ENCODE measurements at regions of chr2 and their contacts with region 1.

Region 1: GRCh38 chr2:197255543-197255942 is 55.0 kb downstream of the ANKRD44 start:
- DNase-seq: peak in 7 of 9 donors; percentile 47 to 83 (median 56)
- ATAC-seq: peak; percentile 96
- H3K4me3 ChIP-seq: peak overlapping the region; percentile 38
- H3K4me3 Mint-ChIP-seq: peak overlapping the region; percentile 69 to 88 (median 77)
- H3K27ac ChIP-seq: peak overlapping the region; percentile 80
- H3K27ac Mint-ChIP-seq: peak overlapping the region; percentile 84 to 98 (median 94)
- H3K4me1 ChIP-seq: peaks cover 68 to 74% of the 10 kb centered on the region in 2 donors
- H3K4me1 Mint-ChIP-seq: peaks cover 58 to 98% (median 82%) of the 10 kb centered on the region in 7 donors
- H3K27me3 ChIP-seq: no peaks in the 10 kb centered on the region
- H3K27me3 Mint-ChIP-seq: no peaks in the 10 kb centered on the region

Region 2: DNA sequence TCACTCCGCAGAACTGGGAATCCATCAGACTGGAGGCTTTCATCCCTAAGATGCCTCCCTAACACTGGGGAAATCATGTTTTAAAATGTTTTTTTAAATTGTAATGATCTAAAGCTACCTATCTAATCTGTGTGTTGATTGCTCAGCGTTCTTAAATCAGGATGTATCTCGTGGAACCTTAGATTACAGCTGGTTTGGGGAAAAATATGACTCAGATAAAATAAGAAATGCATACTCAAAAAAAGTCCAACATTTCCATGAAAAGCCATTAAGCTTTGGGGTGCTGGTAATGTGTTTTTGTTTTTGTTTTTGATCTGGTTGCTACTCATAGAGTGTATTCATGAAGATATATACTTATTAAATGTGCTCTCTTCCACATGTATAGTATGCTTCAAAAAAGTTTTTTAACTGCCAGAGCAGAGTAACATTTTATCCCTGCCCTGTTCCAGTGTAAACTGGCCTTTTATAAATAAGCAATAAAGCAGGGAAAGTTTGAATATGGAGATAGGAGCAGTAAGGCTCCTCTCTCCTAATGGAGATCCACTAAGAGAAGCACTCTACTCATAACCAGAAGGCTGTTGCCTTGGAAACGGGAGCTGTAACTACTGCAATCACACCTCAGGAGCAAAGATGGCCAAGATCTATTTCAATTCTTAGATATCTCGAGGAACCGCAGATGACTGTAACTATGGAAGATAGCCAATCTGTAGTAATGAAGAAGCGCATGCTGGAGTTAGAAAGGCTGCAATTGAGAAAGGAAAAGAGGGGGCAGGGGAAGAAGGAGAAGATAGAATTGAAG is 13.4 kb after region 1 on chr2:
- CTCF ChIA-PET with region 1: no interaction called
- POLR2A ChIA-PET with region 1: interaction called, 4 read pairs
- intact Hi-C with region 1: loop called (anchors 1 kb)
- DNase-seq: peak in 2 of 9 donors; percentile 42 to 61
- ATAC-seq: peak; percentile 73
- H3K4me3 ChIP-seq: no peak overlapping the region
- H3K4me3 Mint-ChIP-seq: peak overlapping the region; percentile 1 to 85 (median 58)
- H3K27ac ChIP-seq: peak overlapping the region; percentile 63
- H3K27ac Mint-ChIP-seq: peak overlapping the region; percentile 76 to 96 (median 85)
- H3K4me1 ChIP-seq: peaks cover 76 to 82% of the 10 kb centered on the region in 2 donors
- H3K4me1 Mint-ChIP-seq: peaks cover 60 to 100% (median 92%) of the 10 kb centered on the region in 7 donors
- H3K27me3 ChIP-seq: no peaks in the 10 kb centered on the region
- H3K27me3 Mint-ChIP-seq: no peaks in the 10 kb centered on the region

Region 3: DNA sequence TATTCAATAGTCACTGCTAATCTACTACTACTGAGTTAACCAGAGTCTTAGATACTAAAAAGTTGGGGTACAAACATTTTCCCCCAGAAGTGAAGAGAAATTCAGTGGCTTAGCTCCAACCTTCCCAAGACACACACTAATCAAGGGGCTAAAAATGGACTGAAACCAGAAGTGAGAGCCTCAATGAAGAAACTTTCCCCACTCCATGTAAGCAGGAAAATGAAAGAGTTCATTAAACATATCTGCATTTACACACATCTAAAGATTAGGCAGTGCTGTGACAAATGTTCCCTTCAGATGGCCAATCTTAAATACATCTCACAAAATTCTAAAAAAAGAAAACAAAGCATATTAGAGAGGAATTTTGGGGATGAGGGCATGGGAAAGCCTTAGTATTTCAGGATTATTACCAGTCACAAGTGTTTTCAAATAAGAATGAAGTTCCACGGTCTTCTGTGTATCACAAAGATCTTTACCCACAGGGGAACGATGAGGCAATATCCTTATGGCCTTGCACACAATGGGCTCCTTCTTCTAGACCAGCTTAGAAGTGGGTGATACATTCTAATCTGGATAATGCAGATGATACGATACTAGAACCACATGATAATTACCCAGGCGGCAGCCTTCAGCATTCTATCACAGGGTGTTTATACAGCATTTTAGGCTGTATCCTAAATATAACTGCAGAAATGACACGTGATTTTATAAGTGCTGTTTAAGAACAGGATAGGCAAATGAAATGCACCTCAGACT is 37.9 kb after region 1 on chr2:
- CTCF ChIA-PET with region 1: interaction called, 3 read pairs
- POLR2A ChIA-PET with region 1: interaction called, 6 read pairs
- intact Hi-C with region 1: loop called in 1 of 2 experiments (anchors 1 kb)
- DNase-seq: peak in 1 of 9 donors; percentile 49
- ATAC-seq: peak; percentile 80
- H3K4me3 ChIP-seq: peak overlapping the region; percentile 23
- H3K4me3 Mint-ChIP-seq: peak overlapping the region; percentile 74 to 97 (median 84)
- H3K27ac ChIP-seq: peak overlapping the region; percentile 69
- H3K27ac Mint-ChIP-seq: peak overlapping the region; percentile 87 to 99 (median 95)
- H3K4me1 ChIP-seq: peaks cover 87 to 93% of the 10 kb centered on the region in 2 donors
- H3K4me1 Mint-ChIP-seq: peaks cover 71 to 96% (median 91%) of the 10 kb centered on the region in 7 donors
- H3K27me3 ChIP-seq: no peaks in the 10 kb centered on the region
- H3K27me3 Mint-ChIP-seq: no peaks in the 10 kb centered on the region

Region 4: DNA sequence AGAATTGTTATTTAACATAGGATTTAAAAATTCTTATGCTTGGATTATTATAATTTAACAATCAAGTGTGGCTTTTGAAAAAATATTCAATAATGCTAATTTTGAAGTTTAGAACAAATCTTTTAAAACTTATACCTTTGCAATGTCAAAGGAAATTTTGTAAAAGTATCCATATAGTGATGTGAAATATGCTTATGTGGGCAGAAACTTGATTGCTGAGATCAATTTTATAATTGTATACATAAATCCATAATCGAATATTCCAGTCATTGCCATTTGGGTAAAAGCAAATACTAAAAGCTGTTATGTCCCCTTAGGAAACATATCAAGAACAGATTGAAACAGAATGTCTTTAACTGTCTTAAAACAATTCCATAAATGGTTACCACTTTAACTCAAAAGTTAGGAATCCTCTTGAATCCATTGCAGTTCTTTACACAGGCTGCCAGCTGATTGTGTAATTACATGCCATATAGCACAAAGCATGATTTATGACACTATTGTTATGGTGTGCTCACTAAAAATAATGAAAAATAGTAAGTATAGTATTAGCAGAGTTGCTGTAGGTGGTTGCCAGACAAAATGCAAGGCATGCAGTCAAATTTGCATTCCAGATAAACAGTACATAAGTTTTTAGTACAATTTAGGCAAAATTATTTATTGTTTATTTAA is 573.1 kb after region 1 on chr2:
- CTCF ChIA-PET with region 1: no interaction called
- POLR2A ChIA-PET with region 1: no interaction called
- intact Hi-C with region 1: no loop called
- DNase-seq: no peak
- ATAC-seq: no peak
- H3K4me3 ChIP-seq: no peak overlapping the region
- H3K4me3 Mint-ChIP-seq: no peak overlapping the region
- H3K27ac ChIP-seq: no peak overlapping the region
- H3K27ac Mint-ChIP-seq: no peak overlapping the region
- H3K4me1 ChIP-seq: peaks cover 0 to 3% of the 10 kb centered on the region in 2 donors
- H3K4me1 Mint-ChIP-seq: peaks cover 0 to 48% (median 38%) of the 10 kb centered on the region in 7 donors
- H3K27me3 ChIP-seq: no peaks in the 10 kb centered on the region
- H3K27me3 Mint-ChIP-seq: no peaks in the 10 kb centered on the region

Region 5: DNA sequence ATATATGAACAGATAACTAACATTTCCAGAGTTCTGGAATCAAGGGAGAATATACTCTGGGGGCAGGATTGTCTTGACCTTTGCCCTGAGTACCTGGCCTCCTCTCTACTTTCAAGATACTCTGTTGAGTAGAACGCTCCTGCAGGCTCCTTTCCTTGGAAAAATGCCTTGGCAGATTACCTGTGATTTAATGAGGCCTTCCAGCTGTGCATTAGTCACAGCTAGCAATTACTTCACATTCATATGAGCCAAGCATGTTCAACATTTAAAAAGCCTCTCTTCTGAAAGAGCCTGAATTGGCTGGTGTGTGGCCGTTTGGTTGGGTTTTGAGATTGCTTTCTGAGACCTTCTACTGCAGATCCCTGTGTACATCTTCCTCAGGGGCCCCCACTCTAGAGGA is 691.0 kb after region 1 on chr2:
- CTCF ChIA-PET with region 1: no interaction called
- POLR2A ChIA-PET with region 1: no interaction called
- intact Hi-C with region 1: no loop called
- DNase-seq: no peak
- ATAC-seq: no peak
- H3K4me3 ChIP-seq: no peak overlapping the region
- H3K4me3 Mint-ChIP-seq: peak overlapping the region in 2 of 10 donors; percentile 19 to 33
- H3K27ac ChIP-seq: no peak overlapping the region
- H3K27ac Mint-ChIP-seq: peak overlapping the region in 3 of 9 donors; percentile 41 to 77 (median 48)
- H3K4me1 ChIP-seq: peaks cover 0 to 34% of the 10 kb centered on the region in 2 donors
- H3K4me1 Mint-ChIP-seq: peaks cover 12 to 95% (median 89%) of the 10 kb centered on the region in 7 donors
- H3K27me3 ChIP-seq: no peaks in the 10 kb centered on the region
- H3K27me3 Mint-ChIP-seq: peaks cover 0 to 2% (median 0%) of the 10 kb centered on the region in 5 donors

Region 6: DNA sequence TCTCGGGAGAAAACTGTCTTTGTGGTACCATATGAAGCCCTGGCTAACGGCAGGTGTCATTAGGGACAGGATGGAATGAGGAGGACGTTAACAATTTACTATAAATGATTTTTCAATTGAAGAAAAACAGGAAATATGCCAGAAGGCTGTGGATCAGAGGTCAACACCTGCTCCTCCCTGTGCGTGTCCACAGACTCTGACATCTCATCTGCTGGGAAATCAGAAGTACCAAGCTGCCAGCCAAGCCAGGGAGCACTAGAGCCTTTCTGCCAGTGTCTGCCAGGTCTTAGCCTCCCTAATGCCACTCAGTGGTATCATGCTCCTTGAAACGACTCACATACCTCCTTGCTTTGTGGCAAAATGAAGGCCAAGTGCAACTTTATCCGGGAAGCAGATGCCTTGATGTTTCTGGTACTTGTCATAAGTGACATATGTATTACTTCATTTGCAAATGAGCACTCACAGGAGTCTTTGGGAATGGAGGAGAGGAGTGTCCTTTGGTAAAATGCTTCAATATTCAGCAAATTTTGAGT is 1661.1 kb after region 1 on chr2:
- CTCF ChIA-PET with region 1: no interaction called
- POLR2A ChIA-PET with region 1: no interaction called
- intact Hi-C with region 1: no loop called
- DNase-seq: no peak
- ATAC-seq: no peak
- H3K4me3 ChIP-seq: no peak overlapping the region
- H3K4me3 Mint-ChIP-seq: no peak overlapping the region
- H3K27ac ChIP-seq: no peak overlapping the region
- H3K27ac Mint-ChIP-seq: no peak overlapping the region
- H3K4me1 ChIP-seq: no peaks in the 10 kb centered on the region
- H3K4me1 Mint-ChIP-seq: no peaks in the 10 kb centered on the region
- H3K27me3 ChIP-seq: no peaks in the 10 kb centered on the region
- H3K27me3 Mint-ChIP-seq: peaks cover 0 to 4% (median 0%) of the 10 kb centered on the region in 5 donors